Activated naive CD4-positive, alpha-beta T cell treated with anti-CD3 and anti-CD28 coated beads for 36 hours (primary cell): ENCODE measurements at regions of chr1 and their contacts with region 1.

Region 1: DNA sequence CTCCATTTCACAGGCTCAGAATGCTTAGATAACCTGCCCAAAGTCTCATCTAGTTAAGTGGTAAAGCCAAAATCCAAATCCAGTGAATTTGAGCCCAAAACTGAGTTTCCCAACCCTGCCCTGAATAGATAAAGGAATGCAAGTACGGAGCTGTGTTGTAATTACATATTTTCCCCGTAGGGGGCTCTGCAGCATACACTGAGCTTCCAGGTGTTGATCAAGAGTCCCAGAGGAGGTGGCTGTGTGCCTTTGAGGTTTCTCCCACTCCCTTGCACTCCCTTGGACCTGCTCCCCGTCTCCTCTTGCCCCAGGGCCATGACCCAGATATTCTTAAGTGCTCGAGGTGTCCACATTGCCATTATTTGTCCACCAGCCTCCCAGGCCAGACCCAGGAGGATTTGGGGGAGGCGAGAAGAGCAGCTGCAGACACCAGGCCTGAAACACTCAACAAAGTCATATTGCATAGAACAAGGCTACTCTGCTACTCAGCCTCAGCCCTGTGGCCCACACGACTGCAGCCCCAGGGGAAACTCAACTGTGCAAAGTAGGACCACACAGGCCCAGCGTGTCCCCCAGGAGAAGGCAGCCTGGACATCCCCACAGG is 18.4 kb upstream of the LY9 start:
- DNase-seq: peak; percentile 75
- H3K4me3 Mint-ChIP-seq: no peak overlapping the region
- H3K27ac Mint-ChIP-seq: no peak overlapping the region
- H3K4me1 Mint-ChIP-seq: peaks cover 56% of the 10 kb centered on the region
- H3K27me3 Mint-ChIP-seq: no peaks in the 10 kb centered on the region

Region 2: DNA sequence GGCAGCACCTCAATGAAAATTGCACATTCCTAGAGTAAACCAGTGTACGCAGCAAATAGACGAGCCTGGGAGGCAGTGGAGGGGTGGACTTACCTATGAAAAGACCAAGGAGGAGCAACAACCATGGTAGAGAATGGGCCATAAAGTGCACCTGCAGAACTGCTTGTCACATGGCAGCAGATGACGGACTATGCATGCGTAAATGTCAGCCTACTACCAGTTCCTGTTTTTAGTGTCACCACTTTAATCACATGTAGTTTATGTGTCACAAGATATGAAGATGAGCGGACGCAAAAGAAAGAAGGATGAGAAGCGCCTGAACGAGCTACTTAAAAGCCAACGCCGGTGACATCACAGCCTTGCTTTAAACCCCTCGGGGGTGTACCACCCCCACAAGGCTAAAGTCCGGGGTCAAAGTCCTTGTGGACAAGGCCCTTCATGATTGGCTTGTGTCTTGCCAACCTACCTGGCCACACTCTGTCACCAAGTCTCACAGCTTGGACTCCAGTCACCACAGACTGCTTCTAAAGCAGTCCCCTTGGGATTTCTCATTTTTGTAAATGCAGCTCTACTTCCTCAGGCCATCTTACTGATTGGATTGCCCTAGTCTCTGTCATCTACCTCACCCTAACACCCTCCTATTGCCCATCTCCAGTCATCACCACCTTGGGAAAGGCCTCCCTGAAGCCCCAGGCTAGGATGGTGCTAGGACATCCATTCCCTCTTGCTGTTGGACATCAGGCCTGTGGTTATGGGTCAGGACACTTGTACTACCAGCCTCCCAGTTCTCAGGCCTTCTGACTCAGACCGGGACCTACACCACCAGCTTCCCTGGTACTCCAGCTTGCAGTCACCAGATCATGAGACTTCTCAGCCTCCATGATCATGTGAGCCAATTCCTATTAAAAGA is 12.4 kb after region 1 on chr1:
- CTCF ChIA-PET with region 1: interaction called, 115 read pairs
- intact Hi-C with region 1: no loop called
- DNase-seq: no peak
- H3K4me3 Mint-ChIP-seq: no peak overlapping the region
- H3K27ac Mint-ChIP-seq: no peak overlapping the region
- H3K4me1 Mint-ChIP-seq: peaks cover 4% of the 10 kb centered on the region
- H3K27me3 Mint-ChIP-seq: no peaks in the 10 kb centered on the region

Region 3: DNA sequence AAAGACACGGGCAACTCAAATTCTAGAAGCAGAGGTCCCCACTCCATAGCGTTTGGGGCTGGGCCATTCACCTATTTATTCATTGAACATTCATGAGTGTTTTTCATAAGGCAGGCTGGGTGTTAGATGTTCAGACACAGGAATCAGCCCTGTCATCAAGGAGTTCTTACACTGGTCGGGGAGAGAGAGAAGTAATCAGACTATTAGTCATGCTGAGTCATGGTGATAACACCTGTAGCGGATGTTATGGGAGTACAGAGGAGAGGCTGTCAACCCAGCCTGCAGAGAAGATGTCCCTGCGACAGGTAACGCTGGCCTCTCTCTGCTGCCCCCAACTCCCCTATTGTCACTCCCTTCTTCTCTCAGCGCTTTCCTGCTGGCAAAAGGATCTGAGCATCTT is 35.6 kb after region 1 on chr1:
- CTCF ChIA-PET with region 1: interaction called, 16 read pairs
- intact Hi-C with region 1: loop called (anchors 5 kb)
- DNase-seq: peak; percentile 34
- H3K4me3 Mint-ChIP-seq: no peak overlapping the region
- H3K27ac Mint-ChIP-seq: peak overlapping the region; percentile 47
- H3K4me1 Mint-ChIP-seq: peaks cover 44% of the 10 kb centered on the region
- H3K27me3 Mint-ChIP-seq: no peaks in the 10 kb centered on the region

Region 4: DNA sequence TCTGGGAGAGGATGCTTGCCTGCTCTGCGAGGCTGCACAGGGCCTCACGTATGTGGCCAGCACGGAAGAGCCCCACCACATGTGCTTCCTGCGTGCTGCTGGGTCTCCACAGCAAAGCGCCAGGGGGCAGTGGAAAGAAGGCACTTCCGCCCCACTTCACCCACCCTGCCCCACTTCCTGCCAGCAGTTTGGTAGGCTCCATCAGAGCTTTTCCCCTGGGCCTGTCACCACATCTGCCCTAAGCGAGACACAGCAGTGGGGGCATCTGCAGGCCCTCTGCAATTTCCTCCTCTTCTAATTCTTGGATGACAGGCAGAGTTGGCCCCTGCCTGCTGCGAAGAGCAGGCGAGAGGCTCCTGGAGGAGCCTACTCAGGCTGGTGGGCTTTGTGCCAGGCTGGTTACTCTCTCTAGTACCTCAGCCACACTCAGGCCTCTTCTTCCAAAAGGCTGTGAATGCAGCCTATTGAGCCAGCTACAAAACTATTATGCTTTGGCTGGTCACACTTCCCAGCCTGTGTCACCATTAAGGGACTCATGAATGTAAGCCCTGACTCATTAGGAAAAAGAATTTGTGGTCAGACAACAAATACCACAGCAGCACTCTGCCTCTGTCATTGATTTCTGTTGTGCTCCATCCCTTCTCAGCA is 60.1 kb after region 1 on chr1:
- CTCF ChIA-PET with region 1: interaction called, 70 read pairs
- intact Hi-C with region 1: no loop called
- DNase-seq: peak; percentile 90
- H3K4me3 Mint-ChIP-seq: peak overlapping the region; percentile 16
- H3K27ac Mint-ChIP-seq: peak overlapping the region; percentile 82
- H3K4me1 Mint-ChIP-seq: peaks cover 49% of the 10 kb centered on the region
- H3K27me3 Mint-ChIP-seq: no peaks in the 10 kb centered on the region

Region 5: DNA sequence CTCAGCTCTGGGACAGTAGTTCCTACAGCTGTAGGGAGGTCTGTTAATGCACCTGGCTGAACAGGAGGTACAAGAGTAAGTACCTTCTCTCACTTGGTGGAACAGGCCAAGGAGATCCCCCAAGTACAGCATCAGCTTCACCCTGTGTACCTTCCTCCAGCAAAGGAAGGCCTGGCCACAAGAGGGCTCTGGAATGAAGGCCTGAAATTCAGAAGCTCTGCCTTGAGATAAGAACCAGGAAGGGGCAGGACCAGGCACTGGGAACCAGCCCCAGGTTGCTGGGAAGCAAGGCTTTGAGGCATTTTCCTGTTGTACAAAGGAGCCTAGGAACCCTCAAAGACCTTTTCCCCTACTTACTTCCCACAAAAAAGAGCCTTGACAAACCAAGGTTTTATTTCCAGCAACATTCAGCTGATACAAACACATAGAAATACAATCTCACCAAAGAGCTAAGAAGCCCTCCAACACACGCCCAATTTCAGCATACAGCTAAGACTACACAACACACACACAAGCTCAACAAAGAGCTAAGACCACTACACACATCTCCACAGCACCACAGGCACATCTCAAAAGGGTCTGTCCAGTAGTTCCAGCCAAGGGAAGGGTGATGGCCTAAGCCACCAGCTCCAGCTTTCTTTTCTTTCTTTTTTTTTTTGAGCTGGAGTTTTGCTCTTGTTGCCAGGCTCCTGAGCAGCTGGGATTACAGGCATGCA is 219.9 kb after region 1 on chr1:
- CTCF ChIA-PET with region 1: interaction called, 4 read pairs
- intact Hi-C with region 1: loop called (anchors 5 kb)
- DNase-seq: peak; percentile 77
- H3K4me3 Mint-ChIP-seq: no peak overlapping the region
- H3K27ac Mint-ChIP-seq: peak overlapping the region; percentile 1
- H3K4me1 Mint-ChIP-seq: peaks cover 6% of the 10 kb centered on the region
- H3K27me3 Mint-ChIP-seq: no peaks in the 10 kb centered on the region

Region 6: DNA sequence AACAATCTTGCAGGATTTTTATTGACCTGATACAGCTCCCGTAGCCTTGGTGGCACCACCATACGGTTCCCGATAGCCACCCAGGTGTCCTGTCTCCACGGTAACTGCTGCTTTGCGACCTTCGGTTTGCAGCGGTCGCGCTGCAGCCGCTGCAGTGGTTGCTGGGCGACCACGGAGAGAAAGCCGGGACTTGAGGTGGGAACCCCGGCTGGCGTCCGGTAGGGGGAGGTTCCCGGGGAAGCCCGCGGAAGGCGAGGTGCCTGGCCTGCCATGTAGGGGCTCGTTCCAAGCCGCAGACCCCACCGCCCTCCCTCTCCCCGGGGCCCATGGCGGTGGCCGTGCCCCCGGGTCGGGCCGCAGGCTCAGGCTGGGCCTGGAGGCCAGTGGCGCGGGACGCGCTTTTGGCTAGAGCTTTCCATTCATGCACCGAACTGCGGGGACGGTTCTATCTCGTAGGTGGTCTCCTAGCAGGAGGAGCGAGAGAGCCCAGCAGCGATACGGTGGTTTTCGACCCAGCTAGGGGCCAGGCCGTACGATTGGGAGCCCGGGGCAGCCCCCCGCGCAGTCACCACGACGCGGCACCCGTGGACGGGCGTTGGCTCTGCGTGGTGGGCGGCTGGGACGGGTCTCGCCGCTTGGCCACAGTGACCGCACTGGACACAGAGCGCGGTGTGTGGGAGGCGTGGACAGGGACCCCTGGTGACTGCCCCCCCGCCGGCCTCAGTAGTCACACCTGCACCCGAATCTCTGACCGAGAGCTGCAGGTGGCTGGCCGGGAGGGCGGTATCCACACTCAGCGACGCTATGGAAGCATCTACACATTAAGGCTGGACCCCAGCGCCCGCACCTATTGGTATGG is 320.9 kb after region 1 on chr1 and contains the start of gene KLHDC9:
- CTCF ChIA-PET with region 1: no interaction called
- intact Hi-C with region 1: no loop called
- DNase-seq: peak; percentile 78
- H3K4me3 Mint-ChIP-seq: peak within 1 kb of the TSS; percentile 70
- H3K27ac Mint-ChIP-seq: peak within 1 kb of the TSS; percentile 54
- H3K4me1 Mint-ChIP-seq: peaks cover 39% of the 10 kb centered on the region
- H3K27me3 Mint-ChIP-seq: no peaks in the 10 kb centered on the region
- total RNA-seq, gene KLHDC9: 0.33 to 0.57 TPM